Activated T-helper 2 cell treated with anti-CD3 and anti-CD28 coated beads, Interferon-gamma antibody, Interleukin-2, Interleukin-4, amounts not matched to agents 10 μg/mL and 5 μg/mL and 100 μg/mL, durations not matched to agents 14 hours and 24 hours and 36 hours (primary cell): ENCODE measurements at regions of chr3 and their contacts with region 1.

Region 1: DNA sequence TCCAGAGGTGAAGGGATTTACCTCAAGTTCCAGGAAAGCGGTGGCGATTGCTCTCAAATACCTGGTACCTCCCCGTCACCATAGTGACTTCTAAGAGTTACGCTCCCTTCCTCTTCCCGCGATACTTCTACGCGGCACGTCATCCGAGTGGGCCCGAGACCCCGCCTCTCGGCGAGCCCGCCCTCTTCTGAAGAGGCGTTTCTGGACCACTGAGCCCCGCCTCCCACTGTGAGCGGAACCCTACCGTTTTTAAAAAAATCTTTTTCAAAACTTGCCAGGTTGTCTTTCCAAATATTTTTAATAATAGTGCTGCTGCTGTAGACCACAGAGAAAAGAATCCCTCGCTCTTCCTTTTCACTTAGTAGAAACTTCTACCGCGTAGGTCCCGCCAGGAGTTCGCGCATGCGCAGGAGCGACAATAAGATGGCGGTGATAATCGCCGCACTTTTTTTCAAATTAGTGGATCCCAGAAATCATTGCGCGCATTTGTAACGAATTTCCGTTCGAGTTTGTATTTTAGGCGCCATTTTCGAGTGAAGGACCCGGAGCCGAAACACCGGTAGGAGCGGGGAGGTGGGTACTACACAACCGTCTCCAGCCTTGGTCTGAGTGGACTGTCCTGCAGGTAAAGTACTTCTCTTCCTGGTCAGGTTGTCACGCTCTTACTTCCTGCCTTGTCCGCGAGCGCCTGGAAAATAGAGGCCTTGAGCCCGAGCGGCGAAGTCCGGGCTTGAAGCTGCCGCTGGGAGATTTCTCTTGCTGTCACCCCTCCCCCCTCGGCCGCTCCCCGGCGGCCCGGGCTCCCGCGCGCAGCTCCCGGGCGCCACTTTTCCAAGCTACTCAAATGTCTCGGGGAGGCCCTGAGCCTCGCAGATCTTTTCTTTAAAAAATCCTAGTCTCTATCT is at the starts of genes IFT80 and SMC4:
- DNase-seq: peak; percentile 92
- H3K4me3 Mint-ChIP-seq: peak within 1 kb of the TSS; percentile 92
- H3K27ac Mint-ChIP-seq: peak within 1 kb of the TSS; percentile 99
- H3K4me1 Mint-ChIP-seq: peaks cover 44% of the 10 kb centered on the region
- H3K27me3 Mint-ChIP-seq: no peaks in the 10 kb centered on the region
- total RNA-seq, gene IFT80: 16.6 and 19.2 TPM in 2 replicates
- total RNA-seq, gene SMC4: 180 and 194 TPM in 2 replicates

Region 2: DNA sequence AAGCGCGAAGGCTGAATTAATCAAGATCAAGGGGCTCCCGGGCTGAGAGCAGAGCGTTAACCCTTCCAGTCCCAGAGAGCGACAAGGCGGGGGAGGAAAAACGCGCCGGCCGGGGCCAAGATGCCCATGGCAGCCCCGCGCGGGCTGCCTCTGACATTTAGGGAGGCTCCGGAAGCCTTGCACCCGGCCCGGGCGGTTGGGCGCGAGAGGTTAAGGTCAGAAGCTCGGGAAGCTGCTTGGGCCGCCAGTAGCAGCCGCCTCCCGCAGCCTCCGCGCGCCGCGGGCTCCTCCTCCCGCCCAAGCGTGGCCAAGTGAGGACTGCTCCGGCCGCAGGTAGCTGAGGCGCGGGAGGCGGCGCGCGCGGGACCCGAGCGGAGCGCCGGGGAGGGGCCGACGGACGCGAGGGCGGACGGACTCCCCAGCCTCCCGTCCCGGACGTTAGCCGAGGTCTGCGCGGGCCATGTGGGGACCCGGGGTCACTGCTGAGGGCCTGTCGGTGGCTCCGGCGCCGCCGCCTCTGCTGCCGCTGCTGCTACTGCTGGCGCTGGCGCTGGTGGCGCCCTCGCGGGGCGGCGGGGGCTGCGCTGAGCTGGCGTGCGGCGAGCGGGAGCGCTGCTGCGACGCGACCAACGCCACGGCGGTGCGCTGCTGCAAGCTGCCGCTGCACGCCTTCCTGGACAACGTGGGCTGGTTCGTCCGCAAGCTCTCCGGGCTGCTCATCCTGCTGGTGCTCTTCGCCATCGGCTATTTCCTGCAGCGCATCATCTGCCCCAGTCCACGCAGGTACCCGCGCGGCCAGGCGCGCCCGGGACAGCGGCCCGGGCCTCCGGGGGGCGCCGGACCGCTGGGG is 174.0 kb before region 1 on chr3 and contains the start of gene C3orf80:
- intact Hi-C with region 1: loop called (anchors 5 kb)
- DNase-seq: peak; percentile 38
- H3K4me3 Mint-ChIP-seq: peak within 1 kb of the TSS; percentile 81
- H3K27ac Mint-ChIP-seq: no peak within 1 kb of the TSS
- H3K4me1 Mint-ChIP-seq: peaks cover 15% of the 10 kb centered on the region
- H3K27me3 Mint-ChIP-seq: peaks cover 67% of the 10 kb centered on the region
- total RNA-seq, gene C3orf80: 0.25 and 0.30 TPM in 2 replicates

Region 3: GRCh38 chr3:160413613-160414248 is 14.4 kb after region 1 on chr3:
- intact Hi-C with region 1: loop called (anchors 1 kb)
- DNase-seq: peak; percentile 60
- H3K4me3 Mint-ChIP-seq: no peak overlapping the region
- H3K27ac Mint-ChIP-seq: no peak overlapping the region
- H3K4me1 Mint-ChIP-seq: peaks cover 51% of the 10 kb centered on the region
- H3K27me3 Mint-ChIP-seq: no peaks in the 10 kb centered on the region

Region 4: GRCh38 chr3:160434071-160434470 is 34.7 kb after region 1 on chr3:
- intact Hi-C with region 1: no loop called
- DNase-seq: no peak
- H3K4me3 Mint-ChIP-seq: no peak overlapping the region
- H3K27ac Mint-ChIP-seq: no peak overlapping the region
- H3K4me1 Mint-ChIP-seq: peaks cover 34% of the 10 kb centered on the region
- H3K27me3 Mint-ChIP-seq: no peaks in the 10 kb centered on the region

Region 5: GRCh38 chr3:160449636-160450598 is 50.5 kb after region 1 on chr3 and contains the start of gene TRIM59:
- intact Hi-C with region 1: loop called (anchors 1 kb)
- DNase-seq: peak; percentile 97
- H3K4me3 Mint-ChIP-seq: peak within 1 kb of the TSS; percentile 91
- H3K27ac Mint-ChIP-seq: peak within 1 kb of the TSS; percentile 95
- H3K4me1 Mint-ChIP-seq: peaks cover 33% of the 10 kb centered on the region
- H3K27me3 Mint-ChIP-seq: peaks cover 2% of the 10 kb centered on the region
- total RNA-seq, gene TRIM59: 35.9 and 37.0 TPM in 2 replicates

Region 6: DNA sequence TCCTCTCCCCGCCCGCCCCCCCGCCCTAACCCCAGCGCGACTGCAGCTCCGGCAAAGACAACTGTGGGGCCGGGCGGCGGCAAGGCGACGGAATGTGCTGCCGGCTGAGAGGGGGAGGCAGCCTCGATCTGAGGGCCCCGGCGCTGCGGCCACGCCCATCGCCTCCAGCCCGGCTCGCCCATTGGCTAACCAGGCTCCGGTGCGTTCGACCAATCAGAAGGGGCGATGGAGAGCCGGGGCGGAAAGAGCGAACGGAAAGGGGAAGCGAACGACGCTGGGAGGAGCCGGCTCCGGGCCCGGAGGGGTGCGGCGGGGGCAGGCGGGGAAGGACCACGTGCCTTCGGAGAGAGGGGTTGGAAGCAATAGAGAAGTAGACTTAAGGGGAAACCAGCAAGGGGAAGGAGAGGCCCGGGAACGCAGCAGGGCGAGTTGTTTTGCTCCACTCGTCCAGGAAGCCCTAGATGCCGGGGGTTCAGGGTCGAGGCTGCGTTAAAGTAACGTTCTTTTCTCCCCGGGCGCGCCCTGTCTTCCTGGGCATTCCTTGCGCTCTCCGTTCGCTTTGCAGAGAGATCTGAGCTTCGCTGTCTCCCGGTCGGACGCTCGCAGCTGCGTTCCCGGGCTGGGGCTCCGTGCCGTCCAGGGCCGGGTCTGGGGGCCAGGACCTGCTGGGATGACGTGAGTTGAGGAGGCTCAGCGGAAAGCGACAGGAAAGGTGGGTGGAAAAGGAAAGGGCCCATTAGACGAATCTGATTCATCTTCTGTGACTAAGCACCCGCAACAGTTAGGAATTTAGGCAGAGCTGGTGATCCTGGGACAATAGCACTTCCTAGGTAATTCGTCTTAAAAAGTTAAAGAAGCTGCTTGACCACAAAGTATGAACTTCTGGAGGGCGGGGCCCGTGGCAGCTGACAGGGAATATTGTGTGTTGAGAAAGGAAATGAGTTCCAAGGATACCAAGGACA is 166.3 kb after region 1 on chr3 and contains the start of gene KPNA4:
- intact Hi-C with region 1: loop called (anchors 1 kb)
- DNase-seq: peak; percentile 96
- H3K4me3 Mint-ChIP-seq: peak within 1 kb of the TSS; percentile 99
- H3K27ac Mint-ChIP-seq: peak within 1 kb of the TSS; percentile 96
- H3K4me1 Mint-ChIP-seq: peaks cover 61% of the 10 kb centered on the region
- H3K27me3 Mint-ChIP-seq: no peaks in the 10 kb centered on the region
- total RNA-seq, gene KPNA4: 69.8 and 71.2 TPM in 2 replicates